PC-3 (cell line): ENCODE measurements at regions of chr22 and their contacts with region 1.

Region 1: DNA sequence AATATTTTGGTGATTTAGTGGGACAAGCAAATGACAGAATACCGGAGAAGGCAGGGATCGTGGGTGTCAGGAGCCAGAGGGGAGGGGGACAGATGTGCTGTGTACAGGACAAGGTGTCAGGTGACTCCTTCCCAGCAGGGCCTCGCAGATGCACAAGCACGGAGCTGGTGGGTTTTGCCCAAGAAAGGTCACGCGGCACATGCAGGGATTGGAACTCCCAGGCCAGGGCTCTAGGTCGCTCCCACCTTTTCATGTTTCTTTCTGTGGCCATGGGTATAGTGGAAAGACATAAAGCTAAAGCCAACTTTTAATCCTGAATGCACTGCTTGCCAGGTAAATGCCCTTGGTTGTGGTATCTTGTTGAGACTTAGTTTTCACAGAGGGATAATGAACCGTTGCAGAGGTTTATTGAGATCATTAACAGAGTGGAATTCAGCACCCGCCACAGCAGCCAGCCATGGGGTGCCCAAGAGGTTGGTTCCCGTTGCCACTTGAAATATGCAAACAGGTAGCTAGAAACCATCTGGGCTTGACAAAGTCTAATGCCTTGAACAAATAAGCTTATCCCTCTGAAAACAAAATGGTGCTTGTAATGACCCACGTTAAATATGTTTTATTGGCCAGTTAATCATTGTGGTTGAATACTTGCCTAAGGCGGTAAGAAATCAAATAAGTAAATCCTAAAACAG is 10.1 kb downstream of the C22orf23 start:
- DNase-seq: peak; percentile 75
- ATAC-seq: peak; percentile 89
- H3K4me3 ChIP-seq: no peak overlapping the region
- H3K27ac ChIP-seq: peak overlapping the region; percentile 13; the same call in 1 of the 2 replicates
- H3K4me1 ChIP-seq: peaks cover 12% of the 10 kb centered on the region
- H3K27me3 ChIP-seq: no peaks in the 10 kb centered on the region
- CTCF ChIP-seq: no peak

Region 2: DNA sequence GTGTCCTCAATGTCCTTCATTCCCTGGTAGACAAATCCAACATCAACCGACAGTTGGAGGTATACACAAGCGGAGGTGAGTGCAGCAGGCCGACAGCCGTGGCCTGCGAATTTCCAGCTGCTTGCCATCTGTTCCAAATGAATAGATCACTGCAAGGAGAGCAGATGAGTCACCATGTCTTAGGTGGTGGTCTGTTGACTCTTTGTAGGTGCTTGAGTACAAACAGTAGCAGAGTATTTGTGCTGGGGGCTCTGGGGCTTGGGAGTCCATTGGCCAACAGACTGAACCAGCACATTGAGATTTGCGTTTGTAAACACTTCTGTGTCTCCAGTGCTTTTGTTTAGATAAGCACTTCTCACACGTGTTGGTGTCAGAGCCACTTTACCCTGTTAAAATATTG is 73.0 kb before region 1 on chr22:
- CTCF ChIA-PET with region 1: no interaction called
- POLR2A ChIA-PET with region 1: no interaction called
- intact Hi-C with region 1: no loop called
- DNase-seq: no peak
- ATAC-seq: no peak
- H3K4me3 ChIP-seq: no peak overlapping the region
- H3K27ac ChIP-seq: no peak overlapping the region
- H3K4me1 ChIP-seq: no peaks in the 10 kb centered on the region
- H3K27me3 ChIP-seq: no peaks in the 10 kb centered on the region
- CTCF ChIP-seq: no peak

Region 3: GRCh38 chr22:38056969-38057891 is 114.0 kb after region 1 on chr22 and contains the start of gene PICK1:
- CTCF ChIA-PET with region 1: no interaction called
- POLR2A ChIA-PET with region 1: interaction called, 10 read pairs
- intact Hi-C with region 1: no loop called
- DNase-seq: peak; percentile 87
- ATAC-seq: peak; percentile 86
- H3K4me3 ChIP-seq: peak within 1 kb of the TSS; percentile 75
- H3K27ac ChIP-seq: peak within 1 kb of the TSS; percentile 68
- H3K4me1 ChIP-seq: peaks cover 6% of the 10 kb centered on the region; the same call in 1 of the 2 replicates
- H3K27me3 ChIP-seq: no peaks in the 10 kb centered on the region
- CTCF ChIP-seq: no peak
- total RNA-seq, gene PICK1: 41.7 and 45.5 TPM in 2 replicates